Breast epithelium (tissue), 4 donors: ENCODE measurements at regions of chr6 and their contacts with region 1.

Region 1: GRCh38 chr6:128743974-128744765 is 138.8 kb upstream of the LAMA2 start:
- DNase-seq: no peak
- H3K4me3 ChIP-seq: no peak overlapping the region
- H3K27ac ChIP-seq: no peak overlapping the region
- H3K4me1 ChIP-seq: no peaks in the 10 kb centered on the region
- H3K27me3 ChIP-seq: no peaks in the 10 kb centered on the region
- CTCF ChIP-seq: no peak
- POLR2A ChIP-seq: no peak

Region 2: DNA sequence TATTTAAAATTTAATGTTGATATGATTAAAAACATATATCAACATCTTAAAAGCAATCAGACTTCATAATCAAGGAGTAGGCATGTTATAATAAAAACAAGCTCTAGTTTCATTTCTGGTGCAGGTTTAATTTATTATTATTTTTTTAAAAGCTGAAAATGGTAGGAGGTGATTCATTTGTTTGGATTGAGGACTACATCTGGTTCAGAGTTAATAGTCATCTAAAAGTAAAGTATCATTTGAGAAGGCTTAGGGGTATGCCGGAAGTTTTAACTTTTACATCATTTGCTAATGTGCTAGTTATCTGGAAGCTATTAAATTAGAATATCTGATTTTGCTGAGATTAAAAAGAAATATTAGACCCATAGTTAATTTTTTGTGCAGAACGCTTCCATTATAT is 30.7 kb before region 1 on chr6:
- intact Hi-C with region 1: no loop called
- DNase-seq: no peak
- H3K4me3 ChIP-seq: no peak overlapping the region
- H3K27ac ChIP-seq: no peak overlapping the region
- H3K4me1 ChIP-seq: no peaks in the 10 kb centered on the region
- H3K27me3 ChIP-seq: no peaks in the 10 kb centered on the region
- CTCF ChIP-seq: no peak
- POLR2A ChIP-seq: no peak

Region 3: DNA sequence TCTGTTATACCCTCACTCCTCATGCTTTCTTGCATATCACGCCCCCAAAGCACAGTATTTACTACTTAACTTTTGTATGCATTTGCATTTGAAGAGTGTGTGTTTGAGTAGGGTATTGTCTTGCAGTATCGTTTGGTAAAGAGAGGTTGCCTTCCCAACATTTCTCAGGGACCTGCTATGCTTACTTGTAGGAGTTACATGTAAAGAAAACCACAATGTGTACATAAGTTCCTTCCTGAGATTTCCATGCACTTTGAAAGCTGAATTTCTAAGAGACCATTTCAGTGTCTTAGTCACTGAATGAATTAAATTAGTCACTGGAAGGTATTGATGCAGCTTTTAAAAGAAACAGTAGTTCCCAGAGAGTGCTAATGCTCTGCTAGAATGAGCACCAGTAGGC is 20.5 kb before region 1 on chr6:
- intact Hi-C with region 1: loop called (anchors 2 kb)
- DNase-seq: no peak
- H3K4me3 ChIP-seq: no peak overlapping the region
- H3K27ac ChIP-seq: no peak overlapping the region
- H3K4me1 ChIP-seq: no peaks in the 10 kb centered on the region
- H3K27me3 ChIP-seq: no peaks in the 10 kb centered on the region
- CTCF ChIP-seq: no peak
- POLR2A ChIP-seq: no peak